ENCODE measurements at regions of chr2 and their contacts with region 1.

Region 1: GRCh38 chr2:75076088-75076487 is 117.6 kb downstream of the POLE4 start:
- DNase-seq: no peak
- H3K4me3 ChIP-seq: no peak overlapping the region
- H3K4me3 Mint-ChIP-seq: no peak overlapping the region
- H3K27ac ChIP-seq: no peak overlapping the region
- H3K27ac Mint-ChIP-seq: no peak overlapping the region
- H3K4me1 ChIP-seq: no peaks in the 10 kb centered on the region
- H3K4me1 Mint-ChIP-seq: no peaks in the 10 kb centered on the region
- H3K27me3 ChIP-seq: no peaks in the 10 kb centered on the region
- H3K27me3 Mint-ChIP-seq: no peaks in the 10 kb centered on the region

Region 2: DNA sequence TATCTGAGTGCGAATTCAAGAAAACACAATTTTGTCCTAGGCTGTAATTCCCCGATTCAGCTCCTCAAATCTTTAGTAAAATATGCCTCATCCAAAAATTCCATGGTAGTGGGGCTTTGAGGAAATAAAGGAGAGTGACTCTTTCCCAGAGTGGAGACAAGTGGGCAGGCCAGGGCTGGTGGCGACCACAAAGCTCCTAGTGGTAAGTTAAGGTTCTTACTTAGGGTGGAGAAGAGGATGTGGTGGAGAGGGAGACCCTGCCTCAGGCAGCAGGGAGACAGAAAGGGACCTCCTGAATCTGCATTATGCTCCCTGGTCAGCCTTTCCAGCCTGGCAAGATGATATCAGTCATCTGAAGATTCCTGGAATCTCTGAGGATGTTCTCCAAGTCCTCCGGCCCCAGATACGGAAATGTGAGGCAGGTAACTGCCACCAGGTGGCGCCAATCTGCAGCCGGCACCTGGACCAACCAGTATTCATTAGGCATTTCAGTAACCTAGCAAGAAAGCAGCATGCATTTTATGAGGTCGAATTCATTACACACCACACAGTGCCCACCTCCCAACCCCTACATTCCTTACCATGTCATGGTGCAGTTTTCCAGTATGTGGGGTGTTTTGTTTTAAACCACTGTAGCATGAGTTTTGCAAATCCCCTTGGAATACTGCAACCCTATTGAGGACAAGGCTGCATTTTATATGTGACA is 11.2 kb before region 1 on chr2:
- CTCF ChIA-PET with region 1: interaction called, 28 read pairs
- POLR2A ChIA-PET with region 1: no interaction called
- intact Hi-C with region 1: no loop called
- DNase-seq: peak in 4 of 5 donors; percentile 18 to 30 (median 26)
- H3K4me3 ChIP-seq: no peak overlapping the region
- H3K4me3 Mint-ChIP-seq: no peak overlapping the region
- H3K27ac ChIP-seq: no peak overlapping the region
- H3K27ac Mint-ChIP-seq: no peak overlapping the region
- H3K4me1 ChIP-seq: no peaks in the 10 kb centered on the region
- H3K4me1 Mint-ChIP-seq: no peaks in the 10 kb centered on the region
- H3K27me3 ChIP-seq: no peaks in the 10 kb centered on the region
- H3K27me3 Mint-ChIP-seq: no peaks in the 10 kb centered on the region